HepG2 (cell line): ENCODE measurements at regions of chr6 and their contacts with region 1.

Region 1: GRCh38 chr6:63571881-63572732 is at the starts of genes LOC128125822 and PTP4A1:
- DNase-seq: peak; percentile 95
- ATAC-seq: peak; percentile 90
- H3K4me3 ChIP-seq: peak within 1 kb of the TSS; percentile 78 to 95 (median 89)
- H3K27ac ChIP-seq: peak within 1 kb of the TSS; percentile 96
- H3K4me1 ChIP-seq: peaks cover 61% of the 10 kb centered on the region
- H3K27me3 ChIP-seq: no peaks in the 10 kb centered on the region; a peak in 1 of 5 replicates
- CTCF ChIP-seq: peak; percentile 31
- EP300 ChIP-seq: peak; percentile 58 to 70
- POLR2A ChIP-seq: peak; percentile 83 to 89
- RAD21 ChIP-seq: no peak; the same call in 1 of the 2 replicates
- total RNA-seq, gene PTP4A1: 376 and 681 TPM in 2 replicates

Region 2: DNA sequence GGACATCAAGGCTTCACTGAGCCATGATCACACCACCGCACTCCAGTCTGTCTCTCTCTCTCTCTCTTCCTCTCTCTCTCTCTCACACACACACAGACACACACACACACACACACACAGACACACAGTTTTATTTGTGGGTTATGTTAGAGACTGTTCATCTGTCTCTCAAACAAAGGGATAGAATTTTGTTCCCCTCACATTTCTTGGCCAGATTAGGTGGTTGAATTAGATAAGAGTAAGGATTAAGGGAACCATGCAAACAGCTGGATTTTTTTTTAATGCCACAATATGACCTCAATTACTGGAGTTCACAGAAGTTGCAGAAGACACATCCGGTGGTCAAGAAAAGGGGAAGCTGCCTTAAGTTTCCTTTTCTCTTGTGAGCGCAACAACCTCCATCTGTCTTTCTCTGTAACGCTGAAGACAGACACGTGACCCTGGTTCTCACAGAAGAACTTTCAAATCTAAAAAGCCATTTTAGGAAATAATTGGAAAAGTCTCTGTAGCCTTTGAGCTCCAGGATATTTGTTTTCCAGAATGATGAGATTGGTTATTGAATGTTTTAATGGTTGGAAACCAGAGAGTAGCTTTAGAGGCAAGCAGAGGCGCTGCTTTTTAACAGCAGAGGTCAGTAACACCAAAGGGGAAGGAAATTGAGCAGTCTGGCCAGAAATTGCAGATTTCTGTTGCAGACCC is 219.4 kb before region 1 on chr6:
- CTCF ChIA-PET with region 1: interaction called, 32 read pairs
- POLR2A ChIA-PET with region 1: interaction called, 25 read pairs
- in situ Hi-C with region 1: loop called (anchors 5 kb)
- intact Hi-C with region 1: loop called (anchors 1 kb)
- DNase-seq: peak; percentile 80
- ATAC-seq: peak; percentile 97
- H3K4me3 ChIP-seq: no peak overlapping the region
- H3K27ac ChIP-seq: peak overlapping the region; percentile 49
- H3K4me1 ChIP-seq: peaks cover 49% of the 10 kb centered on the region
- H3K27me3 ChIP-seq: no peaks in the 10 kb centered on the region
- CTCF ChIP-seq: peak; percentile 97
- EP300 ChIP-seq: peak in 1 of 2 experiments; percentile 66; a peak in 2 of 4 replicates
- POLR2A ChIP-seq: no peak
- RAD21 ChIP-seq: peak; percentile 99

Region 3: DNA sequence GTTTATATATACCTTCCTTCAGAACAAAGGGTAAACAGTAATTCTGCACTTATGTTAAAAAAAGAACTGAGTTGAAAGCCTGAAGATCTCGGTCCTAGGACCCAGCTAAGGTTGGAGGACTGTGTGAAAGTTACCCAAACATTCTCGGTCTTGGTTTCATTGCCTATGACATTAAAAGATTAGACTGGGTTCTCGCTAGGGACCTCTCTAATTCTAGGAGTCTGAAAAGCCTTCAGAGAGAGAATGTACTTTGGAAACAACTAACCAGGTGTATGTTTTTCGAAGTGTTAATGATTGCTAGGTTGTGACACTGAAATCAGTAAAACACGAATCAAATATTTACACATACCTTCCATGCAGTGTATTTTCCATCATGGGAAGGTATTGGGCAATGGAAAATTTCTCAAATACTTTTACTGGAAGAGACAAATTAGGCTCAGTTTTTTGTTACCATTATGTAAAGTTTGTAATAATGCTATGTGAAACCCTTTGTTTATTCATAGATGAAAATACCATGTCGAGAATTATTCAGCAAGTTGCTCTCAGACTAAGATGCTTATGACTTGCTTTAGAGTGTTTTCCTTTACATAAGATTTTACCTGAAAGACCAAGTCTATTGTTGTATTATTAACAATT is 113.5 kb before region 1 on chr6:
- CTCF ChIA-PET with region 1: no interaction called
- POLR2A ChIA-PET with region 1: interaction called, 5 read pairs
- in situ Hi-C with region 1: loop called (anchors 5 kb)
- intact Hi-C with region 1: loop called (anchors 1 kb)
- DNase-seq: peak; percentile 99
- ATAC-seq: peak; percentile 99
- H3K4me3 ChIP-seq: peak overlapping the region in 2 of 3 experiments; percentile 13 to 14; a peak in 2 of 6 replicates
- H3K27ac ChIP-seq: peak overlapping the region; percentile 96
- H3K4me1 ChIP-seq: peaks cover 89% of the 10 kb centered on the region
- H3K27me3 ChIP-seq: no peaks in the 10 kb centered on the region
- CTCF ChIP-seq: no peak
- EP300 ChIP-seq: peak; percentile 99 to 100
- POLR2A ChIP-seq: peak; percentile 53 to 81; a peak in 3 of 4 replicates
- RAD21 ChIP-seq: no peak

Region 4: DNA sequence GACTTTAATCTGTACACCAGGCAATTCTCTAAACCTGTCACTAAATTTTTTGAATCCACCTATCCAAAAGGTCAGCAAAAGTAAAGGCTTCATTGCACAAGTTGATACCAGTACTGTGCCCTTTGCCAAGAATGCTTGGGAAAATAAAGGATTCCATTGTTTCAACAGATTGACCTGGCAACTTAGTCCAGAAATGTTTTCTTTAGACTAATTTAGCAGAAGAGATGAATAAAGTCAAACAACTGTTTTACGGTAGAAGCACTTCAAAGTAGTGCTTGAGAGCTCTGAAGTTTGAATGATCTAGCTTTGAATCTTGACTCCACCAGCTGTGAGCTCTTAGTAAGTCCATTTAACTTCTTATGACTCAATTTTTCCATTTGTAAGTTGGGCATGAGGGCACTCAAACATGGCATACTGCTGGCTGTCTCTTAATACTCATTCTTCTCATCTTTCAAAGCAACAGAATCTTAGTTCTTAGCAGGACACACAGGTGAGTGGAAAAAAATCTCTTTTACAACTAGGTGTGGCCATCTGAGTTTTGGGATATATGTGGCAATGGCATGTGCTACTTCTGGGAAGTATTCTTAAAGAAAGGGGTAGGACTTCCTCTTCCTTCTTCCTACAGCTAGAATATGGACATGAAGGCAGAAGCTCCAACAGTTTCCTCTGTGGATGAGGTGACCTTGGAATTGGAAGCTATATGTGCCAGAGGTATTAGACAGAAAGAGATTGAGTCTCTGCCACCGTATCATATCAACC is 55.7 kb before region 1 on chr6:
- CTCF ChIA-PET with region 1: no interaction called
- POLR2A ChIA-PET with region 1: interaction called, 66 read pairs
- in situ Hi-C with region 1: loop called (anchors 5 kb)
- intact Hi-C with region 1: loop called (anchors 1 kb)
- DNase-seq: peak; percentile 100
- ATAC-seq: peak; percentile 51
- H3K4me3 ChIP-seq: peak overlapping the region; percentile 38 to 62 (median 38); a peak in 5 of 6 replicates
- H3K27ac ChIP-seq: peak overlapping the region; percentile 97
- H3K4me1 ChIP-seq: peaks cover 96% of the 10 kb centered on the region
- H3K27me3 ChIP-seq: no peaks in the 10 kb centered on the region
- CTCF ChIP-seq: 0 out of 2 replicates have a peak, but pooled peaks have one; percentile 3
- EP300 ChIP-seq: peak; percentile 73 to 99; a peak in 3 of 4 replicates
- POLR2A ChIP-seq: peak in 1 of 2 experiments; percentile 66; a peak in 2 of 4 replicates
- RAD21 ChIP-seq: peak; percentile 41; the same call in 1 of the 2 replicates

Region 5: GRCh38 chr6:63527658-63528514 is 44.2 kb before region 1 on chr6:
- CTCF ChIA-PET with region 1: no interaction called
- POLR2A ChIA-PET with region 1: interaction called, 34 read pairs
- in situ Hi-C with region 1: no loop called
- intact Hi-C with region 1: loop called (anchors 1 kb)
- DNase-seq: peak; percentile 99
- ATAC-seq: peak; percentile 92
- H3K4me3 ChIP-seq: peak overlapping the region in 1 of 3 experiments; percentile 8; a peak in 1 of 6 replicates
- H3K27ac ChIP-seq: peak overlapping the region; percentile 82
- H3K4me1 ChIP-seq: peaks cover 80% of the 10 kb centered on the region
- H3K27me3 ChIP-seq: no peaks in the 10 kb centered on the region
- CTCF ChIP-seq: no peak
- EP300 ChIP-seq: peak; percentile 79 to 96; a peak in 3 of 4 replicates
- POLR2A ChIP-seq: peak in 1 of 2 experiments; percentile 34; a peak in 1 of 4 replicates
- RAD21 ChIP-seq: 0 out of 2 replicates have a peak, but pooled peaks have one; percentile 14

Region 6: GRCh38 chr6:63598049-63599036 is 26.2 kb after region 1 on chr6:
- CTCF ChIA-PET with region 1: interaction called, 3 read pairs
- POLR2A ChIA-PET with region 1: interaction called, 12 read pairs
- in situ Hi-C with region 1: no loop called
- intact Hi-C with region 1: no loop called
- DNase-seq: peak; percentile 88
- ATAC-seq: peak; percentile 99
- H3K4me3 ChIP-seq: peak overlapping the region; percentile 70 to 80 (median 73)
- H3K27ac ChIP-seq: peak overlapping the region; percentile 26
- H3K4me1 ChIP-seq: peaks cover 20% of the 10 kb centered on the region
- H3K27me3 ChIP-seq: no peaks in the 10 kb centered on the region; a peak in 1 of 5 replicates
- CTCF ChIP-seq: peak; percentile 98
- EP300 ChIP-seq: no peak
- POLR2A ChIP-seq: peak; percentile 46 to 60; a peak in 3 of 4 replicates
- RAD21 ChIP-seq: peak; percentile 89

Region 7: DNA sequence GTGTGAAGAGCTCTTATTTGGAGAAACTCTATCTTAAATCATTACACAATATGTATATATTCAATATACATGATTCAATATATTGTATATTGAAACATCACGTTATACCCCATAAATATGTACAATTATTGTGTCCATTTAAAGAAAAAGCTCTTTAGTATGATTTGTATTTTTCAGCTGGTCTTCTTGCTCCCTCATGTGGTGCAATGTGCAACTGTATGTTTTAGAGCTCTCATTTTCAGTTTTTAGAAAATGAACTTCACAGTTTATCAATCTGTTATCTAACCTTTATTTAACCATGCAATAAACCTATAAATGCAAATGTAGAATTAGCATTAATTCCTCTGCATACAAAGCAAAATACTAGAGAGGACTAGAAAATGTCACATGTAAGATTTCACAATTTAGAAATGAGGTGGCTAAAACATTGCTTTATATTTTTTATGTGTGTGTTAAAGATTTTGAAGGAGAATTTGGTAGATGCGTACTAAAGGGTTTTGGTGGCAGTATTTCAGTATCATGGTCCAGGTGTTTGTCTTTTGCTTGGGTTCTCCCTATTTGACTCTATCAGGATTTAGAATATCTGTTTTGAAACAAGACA is 230.6 kb after region 1 on chr6:
- CTCF ChIA-PET with region 1: no interaction called
- POLR2A ChIA-PET with region 1: interaction called, 6 read pairs
- in situ Hi-C with region 1: no loop called
- intact Hi-C with region 1: loop called (anchors 2 kb)
- DNase-seq: peak; percentile 31
- ATAC-seq: no peak
- H3K4me3 ChIP-seq: no peak overlapping the region
- H3K27ac ChIP-seq: no peak overlapping the region
- H3K4me1 ChIP-seq: peaks cover 49% of the 10 kb centered on the region
- H3K27me3 ChIP-seq: no peaks in the 10 kb centered on the region
- CTCF ChIP-seq: peak; percentile 66
- EP300 ChIP-seq: no peak
- POLR2A ChIP-seq: no peak
- RAD21 ChIP-seq: peak; percentile 54; the same call in 1 of the 2 replicates